ENCODE measurements at regions of chr14 and their contacts with region 1.

Region 1: GRCh38 chr14:50060871-50061663 is 55.3 kb downstream of the VCPKMT start:
- DNase-seq: peak; percentile 83
- H3K4me3 Mint-ChIP-seq: peak overlapping the region; percentile 85
- H3K27ac Mint-ChIP-seq: peak overlapping the region; percentile 98
- H3K4me1 Mint-ChIP-seq: peaks cover 76% of the 10 kb centered on the region
- H3K27me3 Mint-ChIP-seq: no peaks in the 10 kb centered on the region

Region 2: GRCh38 chr14:49892636-49893308 is 168.3 kb before region 1 on chr14 and contains the start of gene ARF6:
- intact Hi-C with region 1: loop called (anchors 1 kb)
- DNase-seq: peak; percentile 99
- H3K4me3 Mint-ChIP-seq: peak within 1 kb of the TSS; percentile 96
- H3K27ac Mint-ChIP-seq: peak within 1 kb of the TSS; percentile 100
- H3K4me1 Mint-ChIP-seq: peaks cover 21% of the 10 kb centered on the region
- H3K27me3 Mint-ChIP-seq: no peaks in the 10 kb centered on the region
- total RNA-seq, gene ARF6: 154 and 160 TPM in 2 replicates

Region 3: DNA sequence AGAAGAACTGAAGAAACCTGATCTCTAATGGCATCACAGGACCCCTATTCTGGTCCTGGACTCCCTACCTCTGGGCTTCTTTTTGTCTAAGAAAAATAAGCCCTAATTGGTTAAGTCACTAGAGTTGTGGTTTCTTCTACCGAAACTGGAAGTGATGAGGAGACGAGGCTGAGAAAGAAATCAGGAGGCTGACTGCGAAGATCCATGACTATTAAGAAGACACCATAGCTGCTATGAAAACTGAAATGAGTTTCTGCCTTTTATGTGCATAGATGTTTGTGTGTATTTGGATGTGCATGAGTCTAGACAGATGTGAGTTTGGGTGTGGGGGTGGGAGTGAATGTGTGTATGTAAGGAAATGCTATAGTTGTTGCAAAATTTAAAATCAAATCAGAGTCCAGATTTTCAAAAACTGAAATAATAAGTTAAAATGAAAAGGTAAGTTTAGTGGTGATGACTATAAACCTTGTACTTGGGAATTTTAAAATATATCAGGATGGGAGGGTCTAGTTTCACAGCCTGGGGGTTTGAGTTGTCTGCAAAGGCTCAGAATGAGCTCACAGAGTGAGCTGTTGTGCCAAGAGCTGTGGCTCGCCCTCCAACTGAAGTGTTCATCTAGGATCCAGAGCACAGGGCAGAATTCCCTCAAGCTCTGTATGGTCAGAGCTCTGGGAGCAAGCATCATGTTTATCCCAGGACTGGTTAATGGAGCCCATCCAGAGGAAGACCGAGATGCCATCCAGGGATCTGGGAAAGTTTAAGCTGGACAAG is 39.6 kb before region 1 on chr14:
- intact Hi-C with region 1: loop called (anchors 1 kb)
- DNase-seq: peak; percentile 75
- H3K4me3 Mint-ChIP-seq: peak overlapping the region; percentile 52
- H3K27ac Mint-ChIP-seq: peak overlapping the region; percentile 82
- H3K4me1 Mint-ChIP-seq: peaks cover 29% of the 10 kb centered on the region
- H3K27me3 Mint-ChIP-seq: no peaks in the 10 kb centered on the region

Region 4: DNA sequence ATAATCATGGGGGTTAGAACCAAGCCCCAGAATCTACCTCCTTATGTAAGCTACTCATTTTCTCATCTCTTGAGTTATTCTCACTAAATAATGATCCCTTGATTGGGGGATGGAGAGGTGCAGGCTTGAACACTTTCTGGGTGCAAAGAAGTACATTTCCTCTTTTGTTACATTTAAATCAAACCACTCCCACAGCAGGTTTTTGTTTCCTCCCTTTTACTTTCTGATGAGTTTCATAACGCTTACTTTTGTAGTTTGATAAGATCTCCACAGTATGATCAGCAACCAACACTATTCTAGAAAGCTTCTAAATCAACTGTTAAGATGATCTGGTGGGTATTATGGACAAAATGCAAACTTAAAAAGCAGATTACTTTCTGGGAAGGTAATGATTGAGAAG is 34.8 kb after region 1 on chr14:
- intact Hi-C with region 1: loop called (anchors 1 kb)
- DNase-seq: peak; percentile 73
- H3K4me3 Mint-ChIP-seq: peak overlapping the region; percentile 51
- H3K27ac Mint-ChIP-seq: peak overlapping the region; percentile 51
- H3K4me1 Mint-ChIP-seq: peaks cover 53% of the 10 kb centered on the region
- H3K27me3 Mint-ChIP-seq: no peaks in the 10 kb centered on the region

Region 5: GRCh38 chr14:50311975-50312733 is 251.1 kb after region 1 on chr14 and contains the starts of genes DMAC2L and L2HGDH:
- intact Hi-C with region 1: loop called (anchors 5 kb)
- DNase-seq: peak; percentile 98
- H3K4me3 Mint-ChIP-seq: peak within 1 kb of the TSS; percentile 96
- H3K27ac Mint-ChIP-seq: peak within 1 kb of the TSS; percentile 99
- H3K4me1 Mint-ChIP-seq: peaks cover 39% of the 10 kb centered on the region
- H3K27me3 Mint-ChIP-seq: no peaks in the 10 kb centered on the region
- total RNA-seq, gene DMAC2L: 16.3 and 18.8 TPM in 2 replicates
- total RNA-seq, gene L2HGDH: 16.8 and 18.0 TPM in 2 replicates

Measured in activated CD4-positive, alpha-beta T cell treated with anti-CD3 and anti-CD28 coated beads, Interleukin-2, amount 10 ng/mL, durations not matched to agents 24 days and 14 days (primary cell).